Brain microvascular endothelial cell (primary cell): ENCODE measurements at regions of chr12 and their contacts with region 1.

Region 1: DNA sequence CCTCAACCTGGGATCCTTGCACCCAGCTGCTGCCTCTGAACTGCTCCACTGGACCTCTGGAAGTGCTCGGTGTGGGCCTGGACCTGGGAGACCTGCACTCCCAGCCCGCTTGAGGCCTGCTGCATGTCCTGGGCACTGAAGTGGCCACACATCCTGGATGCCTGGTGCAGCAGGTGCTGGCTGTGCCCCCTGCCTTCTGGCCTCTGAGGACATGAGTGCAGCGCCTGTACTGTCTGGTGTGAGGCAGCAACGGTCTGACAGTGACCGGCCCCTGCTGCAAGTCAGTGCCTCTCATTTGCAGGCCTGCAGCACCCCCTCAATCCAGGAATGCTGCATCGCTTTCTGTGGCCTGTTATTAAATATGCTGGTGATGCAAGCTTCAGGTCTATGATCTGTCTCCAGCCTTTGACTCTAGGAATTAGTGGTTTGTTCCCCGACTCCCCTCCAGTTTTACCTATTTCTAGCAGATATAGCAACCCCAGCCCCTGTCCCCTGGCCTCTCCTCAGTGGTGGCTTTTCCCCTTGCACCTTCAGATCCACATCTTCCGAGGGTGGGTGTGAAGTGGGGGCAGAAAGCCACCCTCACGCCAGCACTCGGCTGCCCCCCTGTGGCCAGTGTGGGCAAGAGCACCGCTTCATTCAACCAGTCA is 3.6 kb downstream of the SMIM41 start:
- DNase-seq: peak; percentile 20
- H3K4me3 ChIP-seq: no peak overlapping the region
- H3K27ac ChIP-seq: no peak overlapping the region
- H3K27me3 ChIP-seq: peaks cover 5% of the 10 kb centered on the region
- CTCF ChIP-seq: peak; percentile 100

Region 2: GRCh38 chr12:52023182-52023975 is 59.7 kb before region 1 on chr12:
- in situ Hi-C with region 1: loop called (anchors 5 kb)
- DNase-seq: peak; percentile 49
- H3K4me3 ChIP-seq: peak overlapping the region; percentile 52
- H3K27ac ChIP-seq: no peak overlapping the region
- H3K27me3 ChIP-seq: no peaks in the 10 kb centered on the region
- CTCF ChIP-seq: peak; percentile 76